Activated naive CD4-positive, alpha-beta T cell treated with anti-CD3 and anti-CD28 coated beads for 36 hours (primary cell): ENCODE measurements at regions of chr10 and their contacts with region 1.

Region 1: GRCh38 chr10:116272440-116273283 is at the start of gene GFRA1:
- DNase-seq: no peak
- H3K4me3 Mint-ChIP-seq: peak within 1 kb of the TSS; percentile 27
- H3K27ac Mint-ChIP-seq: no peak within 1 kb of the TSS
- H3K4me1 Mint-ChIP-seq: peaks cover 10% of the 10 kb centered on the region
- H3K27me3 Mint-ChIP-seq: peaks cover 62% of the 10 kb centered on the region
- total RNA-seq, gene GFRA1: not detected

Region 2: DNA sequence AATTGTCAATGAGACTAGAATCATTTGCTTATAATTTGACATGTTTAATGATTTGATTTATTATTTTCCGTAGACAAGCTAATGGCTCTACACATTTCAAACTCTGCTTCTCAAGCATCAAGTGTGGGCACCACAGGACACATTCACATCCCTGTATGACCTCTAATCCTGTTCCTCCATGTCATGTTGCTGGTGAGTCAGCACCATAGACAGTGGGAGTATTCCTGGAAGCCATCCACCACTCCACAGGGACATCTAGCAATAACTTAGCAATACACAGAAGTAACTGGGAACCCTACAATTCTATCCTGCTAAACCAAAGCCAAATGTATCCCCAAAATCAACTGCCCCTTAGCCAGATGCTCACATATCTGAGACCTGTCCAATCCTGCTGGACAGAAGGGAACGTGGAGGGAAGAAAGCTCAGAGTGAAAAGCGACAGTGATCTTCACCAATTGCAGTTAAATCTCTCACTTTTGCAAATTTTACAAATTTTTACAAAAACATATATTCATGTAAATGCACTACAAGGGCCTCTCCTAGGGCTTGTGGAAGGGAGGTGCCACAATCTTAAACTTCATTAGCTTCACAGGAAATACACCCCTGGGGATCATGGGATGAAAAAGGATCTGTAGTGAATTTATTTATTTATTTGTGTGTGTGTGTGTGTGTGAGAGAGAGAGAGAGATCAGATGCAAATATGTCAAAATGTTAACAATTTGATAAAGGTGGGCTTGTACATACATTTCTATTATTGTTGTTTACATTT is 126.1 kb before region 1 on chr10:
- CTCF ChIA-PET with region 1: no interaction called
- intact Hi-C with region 1: loop called (anchors 10 kb)
- DNase-seq: no peak
- H3K4me3 Mint-ChIP-seq: no peak overlapping the region
- H3K27ac Mint-ChIP-seq: no peak overlapping the region
- H3K4me1 Mint-ChIP-seq: peaks cover 10% of the 10 kb centered on the region
- H3K27me3 Mint-ChIP-seq: peaks cover 2% of the 10 kb centered on the region